GM18951 (cell line): ENCODE measurements at regions of chr6 and their contacts with region 1.

Region 1: GRCh38 chr6:10854922-10855632 is 16.7 kb upstream of the MAK start:
- POLR2A ChIP-seq: no peak

Region 2: DNA sequence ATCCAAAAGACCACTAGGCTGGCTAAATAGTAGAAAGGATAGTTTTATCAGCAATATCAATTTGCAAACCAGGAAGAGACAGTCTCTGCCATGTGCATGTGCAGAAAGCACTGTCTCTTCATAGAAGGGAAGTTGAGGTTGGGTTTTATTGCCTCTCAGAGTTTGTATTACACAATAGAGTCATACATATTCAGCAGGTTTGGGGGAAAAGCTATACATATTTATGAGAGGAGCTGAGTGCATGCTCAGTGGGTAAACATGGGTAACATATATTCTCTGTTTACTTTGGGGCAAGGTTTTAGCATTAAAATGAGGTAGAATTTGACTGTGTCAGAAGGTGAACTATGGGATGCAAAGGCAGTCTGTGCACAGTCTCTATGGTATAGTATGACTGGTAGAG is 697.4 kb after region 1 on chr6:
- in situ Hi-C with region 1: loop called (anchors 25 kb)
- POLR2A ChIP-seq: no peak